ENCODE measurements at regions of chr6 and their contacts with region 1.

Region 1: DNA sequence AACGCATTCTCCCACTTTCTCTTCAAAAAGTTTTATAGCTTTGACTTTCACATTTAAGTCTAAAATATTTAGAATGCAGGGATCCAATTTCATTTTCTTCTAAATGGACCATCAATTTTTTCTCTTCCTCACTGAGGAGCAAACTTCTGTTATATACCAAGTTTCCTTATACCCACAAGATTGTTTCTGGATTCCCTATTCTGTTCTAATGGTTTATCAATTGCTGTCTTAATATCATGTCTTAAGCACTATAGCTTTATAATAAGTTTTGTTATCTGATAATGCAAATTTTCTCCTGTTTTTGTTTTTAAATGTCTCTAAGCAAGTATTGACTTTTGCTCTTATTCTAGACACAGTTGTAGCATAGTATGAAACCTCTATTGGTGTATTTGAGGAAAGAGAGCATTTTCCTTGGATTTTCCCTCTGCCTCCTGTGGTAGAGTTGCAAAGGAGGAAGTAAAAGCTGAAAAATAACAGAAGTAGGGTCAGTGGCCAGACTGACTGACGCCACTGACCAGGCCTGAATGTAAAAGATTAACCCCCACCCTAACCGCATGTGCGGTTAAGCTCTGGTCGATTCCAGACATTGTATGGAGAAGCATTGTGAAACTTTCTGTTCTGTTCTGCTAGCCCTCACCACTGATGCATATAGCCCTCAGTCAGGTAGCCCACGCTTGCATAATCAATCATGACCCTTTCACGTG is 40.3 kb downstream of the GPX5 start:
- DNase-seq: no peak
- ATAC-seq: peak in 3 of 4 donors; percentile 37 to 63 (median 40)
- H3K4me3 ChIP-seq: no peak overlapping the region
- H3K27ac ChIP-seq: peak overlapping the region in 1 of 4 donors; percentile 33
- H3K4me1 ChIP-seq: no peaks in the 10 kb centered on the region
- H3K27me3 ChIP-seq: peaks cover 0 to 2% (median 0%) of the 10 kb centered on the region in 4 donors
- CTCF ChIP-seq: no peak

Region 2: DNA sequence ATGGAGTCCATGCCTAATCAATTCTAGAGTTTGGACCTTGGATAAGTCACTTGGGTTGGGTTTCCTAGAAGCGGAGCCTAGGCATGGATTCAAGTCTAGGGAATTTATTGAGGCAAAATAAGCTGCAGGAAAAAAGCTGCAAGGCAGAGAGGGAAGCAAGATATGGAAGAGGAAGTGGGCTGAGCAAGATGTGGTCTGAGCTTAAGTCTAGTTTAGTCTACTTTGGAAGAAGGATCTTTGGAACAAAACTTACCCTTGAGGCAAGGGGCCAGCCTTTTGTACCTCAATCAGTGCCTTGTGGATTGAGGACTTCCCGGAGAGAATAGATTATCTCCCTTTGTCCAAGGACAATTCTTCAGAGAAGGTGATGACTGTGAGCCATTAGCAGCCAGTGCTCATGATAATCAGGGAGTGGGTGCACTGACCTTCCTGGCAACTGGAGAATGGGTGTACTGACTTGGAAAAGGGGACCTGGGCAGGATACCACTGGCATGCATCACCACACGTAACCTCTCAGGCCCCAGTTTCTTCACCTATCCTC is 330.0 kb before region 1 on chr6:
- intact Hi-C with region 1: loop called in 1 of 3 experiments (anchors 10 kb)
- DNase-seq: no peak
- ATAC-seq: no peak
- H3K4me3 ChIP-seq: no peak overlapping the region
- H3K27ac ChIP-seq: no peak overlapping the region
- H3K4me1 ChIP-seq: no peaks in the 10 kb centered on the region
- H3K27me3 ChIP-seq: no peaks in the 10 kb centered on the region
- CTCF ChIP-seq: no peak

Region 3: GRCh38 chr6:28880894-28881780 is 315.2 kb after region 1 on chr6:
- intact Hi-C with region 1: no loop called
- DNase-seq: peak in 5 of 6 donors; percentile 27 to 79 (median 66)
- ATAC-seq: peak; percentile 74 to 87 (median 83)
- H3K4me3 ChIP-seq: peak overlapping the region in 2 of 4 donors; percentile 22 to 36
- H3K27ac ChIP-seq: no peak overlapping the region
- H3K4me1 ChIP-seq: no peaks in the 10 kb centered on the region
- H3K27me3 ChIP-seq: peaks cover 0 to 5% (median 2%) of the 10 kb centered on the region in 4 donors
- CTCF ChIP-seq: no peak

Measured in pancreas (tissue), 10 donors.